Left ventricle myocardium superior (tissue), 1 donor: ENCODE measurements at regions of chr4 and their contacts with region 1.

Region 1: DNA sequence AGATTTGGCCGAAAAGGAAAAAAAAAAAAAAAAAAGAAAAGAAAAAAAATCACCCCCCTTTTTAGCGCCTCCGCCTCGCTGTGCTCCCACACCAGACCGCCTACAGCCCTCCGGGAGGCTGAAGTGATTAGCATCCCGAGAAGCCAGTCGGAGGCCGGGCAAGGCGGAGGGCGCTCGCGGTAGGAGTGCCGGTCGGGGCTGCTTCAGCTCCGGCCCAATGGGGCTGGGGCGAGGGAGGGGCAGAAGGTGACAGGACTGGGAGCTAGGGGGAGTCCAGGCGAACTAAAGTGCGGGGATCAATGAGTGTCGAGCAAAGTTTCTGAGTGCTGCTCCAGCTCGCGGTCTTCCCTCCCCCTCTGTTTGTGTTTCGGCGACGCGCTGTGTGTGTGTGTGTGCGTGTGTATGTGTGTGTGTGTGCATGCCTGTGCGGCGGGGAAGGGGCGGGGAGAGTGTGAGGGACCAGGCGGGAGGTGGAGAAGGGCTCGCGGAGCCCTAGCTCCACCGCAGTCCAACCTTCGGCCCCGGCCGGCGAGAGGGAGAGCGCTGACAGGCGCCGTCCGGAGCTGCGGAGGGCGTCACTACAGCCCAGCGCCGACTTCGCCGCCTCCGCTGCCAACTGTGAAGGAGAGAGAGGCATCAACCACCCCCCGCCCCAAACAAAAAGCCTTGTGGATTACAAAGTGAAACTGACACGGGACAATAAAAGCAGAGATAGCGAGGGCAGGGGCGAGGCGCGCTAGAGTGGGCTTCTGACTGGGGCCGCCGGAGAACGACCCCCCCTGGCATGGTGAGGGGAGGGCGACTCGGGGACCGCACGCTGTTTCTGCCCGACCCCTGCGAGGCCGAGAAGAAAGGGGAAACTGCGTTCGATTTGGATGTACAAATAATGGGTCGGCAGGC is at the start of gene FAT4:
- DNase-seq: peak; percentile 97
- ATAC-seq: peak; percentile 95
- total RNA-seq, gene FAT4: 6.1 TPM

Region 2: DNA sequence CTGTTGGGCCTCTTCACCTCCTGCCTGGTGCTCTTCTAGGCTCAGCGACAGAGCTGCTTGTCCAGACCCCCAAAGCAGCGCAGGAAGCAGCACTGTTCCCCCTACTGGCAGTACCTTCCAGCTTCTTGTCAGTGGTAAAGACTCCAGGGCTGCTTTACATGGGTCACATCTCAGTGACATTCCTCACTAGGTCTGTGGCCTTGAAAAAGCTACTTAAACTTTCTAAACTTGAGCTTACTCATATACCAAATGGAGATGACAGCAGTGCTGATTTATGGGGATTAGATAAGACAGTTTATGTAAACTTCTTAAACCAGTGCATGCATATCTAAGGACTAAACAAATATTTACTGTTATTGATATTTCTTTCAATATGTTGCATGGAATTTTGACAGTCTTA is 117.2 kb after region 1 on chr4:
- intact Hi-C with region 1: loop called (anchors 10 kb)
- DNase-seq: no peak
- ATAC-seq: peak; percentile 80

Region 3: DNA sequence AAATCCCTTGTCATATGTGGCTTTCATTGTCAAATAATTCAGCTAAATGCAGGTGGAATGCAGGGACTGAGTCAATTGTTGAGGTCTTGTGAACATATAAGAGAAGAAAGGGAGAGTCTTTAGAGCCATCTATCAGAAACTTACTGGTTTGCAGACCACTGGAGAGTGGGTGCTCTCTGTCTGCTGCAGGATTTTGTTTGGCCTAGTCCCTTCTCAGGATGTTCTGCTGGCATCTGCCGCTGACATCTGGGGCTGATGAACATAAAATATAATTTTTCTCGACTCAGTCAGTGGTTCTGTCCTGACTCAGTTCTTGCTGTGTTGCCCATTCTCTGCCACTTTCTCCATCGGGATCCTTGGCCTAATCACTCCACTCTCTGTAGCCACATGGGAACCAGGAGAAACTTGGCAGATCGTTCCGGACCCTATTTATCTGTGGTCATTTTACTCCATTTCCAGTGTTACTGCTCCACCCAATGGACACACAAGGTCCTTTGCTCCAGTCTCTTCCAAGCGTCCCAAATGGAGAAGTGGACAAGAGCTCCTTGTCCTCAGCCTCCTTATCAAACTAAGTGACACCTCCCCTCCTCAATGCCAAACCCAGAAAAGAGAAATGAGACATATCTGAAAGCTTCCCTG is 436.0 kb after region 1 on chr4:
- intact Hi-C with region 1: loop called (anchors 2 kb)
- DNase-seq: no peak
- ATAC-seq: peak; percentile 84